Activated CD4-positive, alpha-beta T cell treated with anti-CD3 and anti-CD28 coated beads for 36 hours (primary cell): ENCODE measurements at regions of chr7 and their contacts with region 1.

Region 1: GRCh38 chr7:129611246-129612111 is at the start of gene NRF1:
- DNase-seq: peak; percentile 96
- ATAC-seq: peak; percentile 87
- H3K4me3 Mint-ChIP-seq: peak within 1 kb of the TSS; percentile 90
- H3K27ac Mint-ChIP-seq: peak within 1 kb of the TSS; percentile 96
- H3K4me1 Mint-ChIP-seq: peaks cover 61% of the 10 kb centered on the region
- H3K27me3 Mint-ChIP-seq: no peaks in the 10 kb centered on the region
- total RNA-seq, gene NRF1: 20.5 to 28.9 TPM

Region 2: DNA sequence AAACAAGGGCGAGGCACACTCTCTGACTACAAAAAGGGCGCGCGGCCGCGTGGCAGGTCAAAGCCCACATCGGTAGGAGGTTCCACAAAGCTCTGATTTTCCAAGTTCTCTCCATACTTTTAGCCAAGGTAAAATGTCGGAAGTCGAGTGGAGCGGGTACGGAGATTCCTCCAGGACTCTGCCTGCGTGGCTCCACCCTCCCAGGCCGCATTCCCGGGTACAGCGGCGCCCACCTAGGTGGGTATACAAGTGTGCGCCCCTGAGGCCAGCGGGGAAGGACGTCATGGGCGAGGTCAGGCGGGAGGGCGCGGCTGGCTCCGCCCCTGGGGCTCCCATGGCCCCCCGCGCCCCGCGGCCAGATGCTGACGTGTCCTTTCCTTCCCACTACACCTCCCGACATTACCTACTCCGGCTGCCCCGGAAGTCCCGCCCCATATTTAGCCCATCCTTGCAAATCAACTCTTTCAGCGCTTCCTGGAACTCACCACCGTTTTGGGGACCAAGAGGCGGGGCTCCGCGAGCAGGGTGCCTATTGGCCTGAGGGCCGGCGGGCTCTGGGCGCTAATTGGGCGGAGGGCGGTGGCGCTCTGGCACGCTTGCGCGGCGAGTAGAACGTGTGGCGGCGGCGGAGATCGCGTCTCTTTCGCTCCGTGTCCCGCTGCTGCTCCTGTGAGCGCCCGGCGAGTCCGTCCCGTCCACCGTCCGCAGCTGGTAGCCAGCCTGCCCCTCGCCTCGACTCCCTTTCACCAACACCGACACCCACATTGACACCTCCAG is 1959.7 kb before region 1 on chr7 and contains the start of gene SND1:
- CTCF ChIA-PET with region 1: no interaction called
- POLR2A ChIA-PET with region 1: no interaction called
- intact Hi-C with region 1: loop called in 1 of 2 experiments (anchors 5 kb)
- DNase-seq: peak; percentile 99
- ATAC-seq: peak; percentile 94
- H3K4me3 Mint-ChIP-seq: no peak within 1 kb of the TSS
- H3K27ac Mint-ChIP-seq: peak within 1 kb of the TSS; percentile 99
- H3K4me1 Mint-ChIP-seq: peaks cover 37% of the 10 kb centered on the region
- H3K27me3 Mint-ChIP-seq: no peaks in the 10 kb centered on the region
- total RNA-seq, gene SND1: 193 to 214 TPM

Region 3: GRCh38 chr7:129502376-129502776 is 109.1 kb before region 1 on chr7 and contains the start of gene SMKR1:
- CTCF ChIA-PET with region 1: no interaction called
- POLR2A ChIA-PET with region 1: no interaction called
- intact Hi-C with region 1: loop called (anchors 1 to 10 kb)
- DNase-seq: peak; percentile 91
- ATAC-seq: peak; percentile 95
- H3K4me3 Mint-ChIP-seq: peak within 1 kb of the TSS; percentile 71
- H3K27ac Mint-ChIP-seq: peak within 1 kb of the TSS; percentile 73
- H3K4me1 Mint-ChIP-seq: peaks cover 11% of the 10 kb centered on the region
- H3K27me3 Mint-ChIP-seq: no peaks in the 10 kb centered on the region
- total RNA-seq, gene SMKR1: 2.3 to 2.7 TPM

Region 4: GRCh38 chr7:129530795-129531391 is 80.6 kb before region 1 on chr7:
- CTCF ChIA-PET with region 1: interaction called, 3 read pairs
- POLR2A ChIA-PET with region 1: no interaction called
- intact Hi-C with region 1: loop called (anchors 1 to 2 kb)
- DNase-seq: peak; percentile 70
- ATAC-seq: peak; percentile 96
- H3K4me3 Mint-ChIP-seq: no peak overlapping the region
- H3K27ac Mint-ChIP-seq: peak overlapping the region; percentile 13
- H3K4me1 Mint-ChIP-seq: peaks cover 11% of the 10 kb centered on the region
- H3K27me3 Mint-ChIP-seq: peaks cover 10% of the 10 kb centered on the region

Region 5: DNA sequence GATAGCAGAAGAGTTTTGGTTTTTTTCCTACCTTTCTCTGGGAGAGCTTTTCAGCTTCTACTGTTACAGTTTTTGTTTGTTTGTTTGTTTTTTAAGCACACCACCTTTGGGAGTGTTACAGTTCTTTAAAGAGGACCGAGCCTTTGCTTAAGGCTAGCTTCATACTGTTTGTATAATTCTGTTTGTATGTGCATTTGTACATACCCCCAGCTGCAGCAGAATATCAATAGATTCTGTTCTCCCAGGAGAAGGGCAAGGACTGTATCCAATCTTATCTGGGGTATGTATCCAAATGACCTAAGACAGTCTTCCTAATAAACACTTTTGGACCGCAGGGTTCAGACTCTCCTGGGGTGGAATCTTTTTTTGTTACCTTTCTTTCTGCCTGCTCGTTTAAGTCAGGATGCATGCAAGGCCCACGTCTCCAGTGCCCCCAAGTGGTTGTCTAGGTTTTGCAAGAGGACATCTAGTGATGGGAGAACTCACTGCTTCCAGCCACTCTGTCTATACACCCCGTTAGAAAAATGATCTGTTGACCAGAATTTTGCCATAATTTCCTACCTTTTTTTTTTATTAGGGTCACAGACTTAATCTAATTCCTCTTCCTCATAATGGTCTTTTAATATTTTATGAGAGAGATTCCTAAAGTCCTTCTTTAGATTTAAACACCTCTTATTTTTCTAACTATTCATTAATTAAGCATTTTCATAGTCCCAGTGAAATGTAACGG is 24.0 kb after region 1 on chr7:
- CTCF ChIA-PET with region 1: interaction called, 20 read pairs
- POLR2A ChIA-PET with region 1: interaction called, 3 read pairs
- intact Hi-C with region 1: loop called (anchors 1 kb)
- DNase-seq: peak; percentile 84
- ATAC-seq: peak; percentile 97
- H3K4me3 Mint-ChIP-seq: no peak overlapping the region
- H3K27ac Mint-ChIP-seq: peak overlapping the region; percentile 65
- H3K4me1 Mint-ChIP-seq: peaks cover 37% of the 10 kb centered on the region
- H3K27me3 Mint-ChIP-seq: no peaks in the 10 kb centered on the region

Region 6: GRCh38 chr7:129780257-129780973 is 168.9 kb after region 1 on chr7:
- CTCF ChIA-PET with region 1: no interaction called
- POLR2A ChIA-PET with region 1: no interaction called
- intact Hi-C with region 1: loop called in 1 of 2 experiments (anchors 1 kb)
- DNase-seq: peak; percentile 92
- ATAC-seq: peak; percentile 82
- H3K4me3 Mint-ChIP-seq: peak overlapping the region; percentile 66
- H3K27ac Mint-ChIP-seq: no peak overlapping the region
- H3K4me1 Mint-ChIP-seq: peaks cover 33% of the 10 kb centered on the region
- H3K27me3 Mint-ChIP-seq: peaks cover 58% of the 10 kb centered on the region

Region 7: GRCh38 chr7:130205084-130205947 is 593.8 kb after region 1 on chr7 and contains the start of gene TMEM209:
- CTCF ChIA-PET with region 1: no interaction called
- POLR2A ChIA-PET with region 1: no interaction called
- intact Hi-C with region 1: loop called in 1 of 2 experiments (anchors 10 kb)
- DNase-seq: peak; percentile 96
- ATAC-seq: peak; percentile 98
- H3K4me3 Mint-ChIP-seq: peak within 1 kb of the TSS; percentile 93
- H3K27ac Mint-ChIP-seq: peak within 1 kb of the TSS; percentile 100
- H3K4me1 Mint-ChIP-seq: peaks cover 35% of the 10 kb centered on the region
- H3K27me3 Mint-ChIP-seq: no peaks in the 10 kb centered on the region
- total RNA-seq, gene TMEM209: 41.0 to 57.0 TPM